Dorsolateral prefrontal cortex (tissue), 120 donors: ENCODE measurements at regions of chr12 and their contacts with region 1.

Region 1: DNA sequence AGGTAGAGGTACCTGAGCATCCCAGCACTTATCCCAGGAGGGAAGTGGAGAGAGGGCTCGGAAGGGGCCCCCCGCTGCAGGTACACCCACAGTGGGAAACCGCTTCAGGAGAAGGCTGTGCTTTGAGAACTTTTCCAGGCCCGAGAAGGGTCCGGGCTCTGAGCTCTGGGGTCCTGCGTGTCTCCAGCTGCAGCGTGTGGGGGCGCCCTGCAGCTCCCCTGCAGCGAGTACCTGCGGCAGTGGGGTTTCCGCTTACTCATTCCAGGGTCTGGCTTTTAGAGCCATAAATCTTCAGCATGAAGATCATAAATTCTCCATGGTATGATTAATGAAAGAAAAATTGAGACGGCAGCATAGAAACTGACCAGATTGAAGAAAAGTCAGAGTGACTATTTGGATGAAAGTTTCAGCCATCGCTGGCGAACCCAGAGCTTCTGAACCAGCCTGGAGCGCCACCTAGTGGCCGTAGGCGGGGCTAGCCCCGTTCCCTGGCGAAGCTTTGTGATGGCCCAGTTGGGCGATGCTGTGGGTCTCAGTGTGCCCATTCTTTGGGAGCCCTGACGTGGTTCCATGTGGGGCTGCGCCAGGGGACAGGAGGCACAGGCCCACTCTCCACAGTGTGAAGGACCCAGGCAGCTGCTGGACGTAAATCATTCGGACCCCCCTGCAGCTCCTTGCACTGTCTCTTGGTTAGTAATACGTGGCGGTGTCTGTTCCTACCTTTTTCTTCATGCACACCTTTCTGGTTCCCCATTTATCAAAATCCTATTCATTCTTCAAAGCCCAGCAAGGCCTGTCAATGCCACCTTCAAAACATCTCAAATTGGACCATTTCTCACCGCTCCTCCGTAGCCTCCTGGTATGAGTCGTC is 198.2 kb downstream of the TSPAN9 start:
- DNase-seq: peak in 9 of 10 donors; percentile 72 to 89 (median 78)
- H3K4me3 ChIP-seq: no peak overlapping the region
- H3K27ac ChIP-seq: peak overlapping the region in 3 of 59 donors; percentile 4 to 93 (median 24)
- H3K27me3 ChIP-seq: peaks cover 0 to 18% (median 0%) of the 10 kb centered on the region in 45 donors
- CTCF ChIP-seq: peak; percentile 80 to 100 (median 96)

Region 2: GRCh38 chr12:3135522-3136461 is 139.6 kb before region 1 on chr12:
- intact Hi-C with region 1: loop called (anchors 1 to 2 kb)
- DNase-seq: peak in 3 of 10 donors; percentile 38 to 77 (median 39)
- H3K4me3 ChIP-seq: no peak overlapping the region
- H3K27ac ChIP-seq: peak overlapping the region in 1 of 59 donors; percentile 48
- H3K27me3 ChIP-seq: peaks cover 0 to 34% (median 0%) of the 10 kb centered on the region in 45 donors
- CTCF ChIP-seq: peak; percentile 56 to 93 (median 84)

Region 3: GRCh38 chr12:3202734-3203446 is 72.5 kb before region 1 on chr12:
- intact Hi-C with region 1: loop called in 1 of 2 experiments (anchors 5 kb)
- DNase-seq: peak in 7 of 10 donors; percentile 35 to 83 (median 43)
- H3K4me3 ChIP-seq: peak overlapping the region in 5 of 59 donors; percentile 13 to 65 (median 17)
- H3K27ac ChIP-seq: peak overlapping the region in 1 of 59 donors; percentile 89
- H3K27me3 ChIP-seq: peaks cover 0 to 60% (median 11%) of the 10 kb centered on the region in 45 donors
- CTCF ChIP-seq: peak; percentile 59 to 90 (median 81)

Region 4: DNA sequence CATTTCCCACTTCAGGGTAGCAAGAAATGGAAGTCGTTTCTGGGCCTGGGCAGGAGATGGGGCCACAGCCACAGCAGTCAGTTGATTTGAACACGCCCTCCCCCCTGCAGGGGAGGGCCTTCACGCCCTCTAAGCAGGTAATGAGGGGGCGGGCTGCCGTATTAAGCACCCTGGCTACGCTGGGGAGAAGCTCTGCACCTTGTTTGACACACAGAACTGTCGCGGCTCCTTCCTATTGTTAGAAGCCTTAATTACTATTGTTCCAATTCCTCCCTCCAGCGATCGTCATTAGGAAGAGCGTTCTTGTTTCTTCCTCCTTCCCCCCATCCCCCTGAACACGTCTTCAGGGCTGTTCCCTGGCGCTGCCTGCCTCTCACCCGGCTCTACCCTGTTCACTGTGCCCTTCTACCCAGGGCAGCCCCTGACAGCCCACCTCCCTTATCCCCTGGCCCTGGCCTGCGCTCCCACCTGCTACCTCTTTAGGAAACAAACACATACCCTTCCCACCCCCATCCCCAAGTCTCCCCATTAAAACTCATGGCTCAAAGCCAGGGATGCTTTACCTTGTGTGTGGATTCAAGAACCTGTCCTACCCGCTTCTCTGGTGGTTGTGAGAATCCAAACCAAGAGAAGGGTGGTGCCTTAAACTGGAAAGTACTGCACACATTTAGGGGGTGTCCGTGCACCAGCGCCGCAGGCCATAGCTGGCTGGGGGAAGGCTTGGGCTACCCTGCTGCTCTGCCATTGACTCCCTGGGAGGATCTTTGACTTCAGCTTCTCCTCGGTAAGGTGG is 60.6 kb before region 1 on chr12:
- intact Hi-C with region 1: no loop called
- DNase-seq: no peak
- H3K4me3 ChIP-seq: no peak overlapping the region
- H3K27ac ChIP-seq: peak overlapping the region in 3 of 59 donors; percentile 10 to 86 (median 34)
- H3K27me3 ChIP-seq: no peaks in the 10 kb centered on the region
- CTCF ChIP-seq: no peak